AG04450 (cell line): ENCODE measurements at regions of chr1 and their contacts with region 1.

Region 1: DNA sequence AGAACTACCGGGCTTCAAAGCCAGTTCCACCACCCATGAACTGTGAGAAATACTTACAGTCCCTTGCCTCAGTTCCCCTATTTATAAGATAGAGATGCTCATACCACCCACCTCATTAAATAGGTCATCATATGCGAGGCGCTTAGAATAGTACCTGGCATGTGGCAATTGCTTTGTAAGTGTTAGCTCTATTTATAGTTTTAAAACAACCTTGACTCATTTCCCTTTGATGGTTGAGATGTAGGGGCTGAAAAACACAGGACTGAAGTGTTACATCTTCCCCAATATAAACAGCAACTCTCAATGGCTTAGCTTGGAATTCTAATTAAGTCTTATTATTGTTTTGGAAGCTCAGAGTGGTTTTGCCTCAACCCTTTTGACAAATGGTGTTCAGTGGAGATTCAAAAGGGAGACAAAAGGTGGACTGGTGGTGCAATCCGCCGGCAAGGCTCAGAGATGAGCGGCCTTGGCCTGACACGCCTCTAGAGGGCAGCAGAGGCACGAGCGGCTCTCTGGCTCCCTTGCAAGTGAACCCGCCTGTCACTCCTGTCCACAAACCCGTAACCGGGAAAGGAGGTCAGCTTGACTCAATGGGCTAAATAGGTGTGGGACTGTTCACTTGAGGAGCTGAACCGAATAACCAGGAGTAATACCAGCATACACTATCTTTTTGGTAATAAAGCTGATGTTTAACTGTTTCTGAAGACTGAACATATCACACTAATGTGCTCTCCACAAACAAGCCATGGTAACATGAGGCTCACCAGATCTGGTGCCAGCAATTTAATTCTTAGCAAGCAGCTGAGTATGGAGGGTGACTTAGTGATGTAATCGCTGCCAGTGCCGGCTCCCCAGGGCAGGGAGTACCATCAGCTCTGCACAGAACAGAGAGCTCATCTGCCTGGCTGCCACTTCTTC is 19.5 kb upstream of the SMYD2 start:
- DNase-seq: peak; percentile 27
- H3K4me3 ChIP-seq: no peak overlapping the region; the same call in 1 of the 2 replicates
- H3K27ac ChIP-seq: no peak overlapping the region
- H3K27me3 ChIP-seq: peaks cover 5% of the 10 kb centered on the region
- CTCF ChIP-seq: peak; percentile 99

Region 2: GRCh38 chr1:214198571-214198970 is 62.9 kb before region 1 on chr1:
- CTCF ChIA-PET with region 1: interaction called, 26 read pairs
- POLR2A ChIA-PET with region 1: no interaction called
- DNase-seq: no peak
- H3K4me3 ChIP-seq: no peak overlapping the region
- H3K27ac ChIP-seq: no peak overlapping the region
- H3K27me3 ChIP-seq: peaks cover 37% of the 10 kb centered on the region
- CTCF ChIP-seq: no peak

Region 3: GRCh38 chr1:214224611-214225354 is 36.7 kb before region 1 on chr1:
- CTCF ChIA-PET with region 1: interaction called, 46 read pairs
- POLR2A ChIA-PET with region 1: no interaction called
- DNase-seq: no peak
- H3K4me3 ChIP-seq: peak overlapping the region; percentile 54
- H3K27ac ChIP-seq: peak overlapping the region; percentile 21
- H3K27me3 ChIP-seq: peaks cover 16% of the 10 kb centered on the region
- CTCF ChIP-seq: no peak

Region 4: GRCh38 chr1:214281720-214282629 is 20.5 kb after region 1 on chr1:
- CTCF ChIA-PET with region 1: interaction called, 75 read pairs
- POLR2A ChIA-PET with region 1: no interaction called
- DNase-seq: peak; percentile 36
- H3K4me3 ChIP-seq: peak overlapping the region; percentile 82
- H3K27ac ChIP-seq: peak overlapping the region; percentile 59
- H3K27me3 ChIP-seq: no peaks in the 10 kb centered on the region
- CTCF ChIP-seq: no peak

Region 5: GRCh38 chr1:214303141-214303930 is 41.9 kb after region 1 on chr1:
- CTCF ChIA-PET with region 1: interaction called, 28 read pairs
- POLR2A ChIA-PET with region 1: no interaction called
- DNase-seq: no peak
- H3K4me3 ChIP-seq: peak overlapping the region; percentile 41
- H3K27ac ChIP-seq: no peak overlapping the region
- H3K27me3 ChIP-seq: no peaks in the 10 kb centered on the region
- CTCF ChIP-seq: no peak

Region 6: GRCh38 chr1:214321705-214322453 is 60.4 kb after region 1 on chr1:
- CTCF ChIA-PET with region 1: interaction called, 435 read pairs
- POLR2A ChIA-PET with region 1: no interaction called
- DNase-seq: no peak
- H3K4me3 ChIP-seq: no peak overlapping the region
- H3K27ac ChIP-seq: no peak overlapping the region
- H3K27me3 ChIP-seq: no peaks in the 10 kb centered on the region
- CTCF ChIP-seq: no peak

Region 7: DNA sequence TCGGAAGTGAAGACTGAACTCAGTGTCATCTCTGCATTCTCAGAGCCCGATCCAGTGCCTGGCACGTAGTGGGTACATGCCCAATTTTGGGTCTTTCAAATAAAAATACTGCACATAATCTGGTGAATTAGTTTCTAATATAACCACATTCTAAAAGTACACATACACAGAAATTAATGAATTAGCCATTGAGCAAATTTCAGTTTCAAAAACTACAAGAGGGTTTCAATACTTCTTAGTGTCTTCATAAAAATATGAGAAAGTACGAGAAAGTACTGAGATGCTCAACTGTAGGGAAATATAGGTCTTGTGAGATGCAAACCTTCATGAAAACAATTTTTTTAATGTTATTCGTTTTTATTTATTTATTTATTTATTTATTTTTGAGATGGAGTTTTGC is 106.4 kb after region 1 on chr1:
- CTCF ChIA-PET with region 1: no interaction called
- POLR2A ChIA-PET with region 1: no interaction called
- DNase-seq: no peak
- H3K4me3 ChIP-seq: no peak overlapping the region
- H3K27ac ChIP-seq: no peak overlapping the region
- H3K27me3 ChIP-seq: no peaks in the 10 kb centered on the region
- CTCF ChIP-seq: no peak

Region 8: DNA sequence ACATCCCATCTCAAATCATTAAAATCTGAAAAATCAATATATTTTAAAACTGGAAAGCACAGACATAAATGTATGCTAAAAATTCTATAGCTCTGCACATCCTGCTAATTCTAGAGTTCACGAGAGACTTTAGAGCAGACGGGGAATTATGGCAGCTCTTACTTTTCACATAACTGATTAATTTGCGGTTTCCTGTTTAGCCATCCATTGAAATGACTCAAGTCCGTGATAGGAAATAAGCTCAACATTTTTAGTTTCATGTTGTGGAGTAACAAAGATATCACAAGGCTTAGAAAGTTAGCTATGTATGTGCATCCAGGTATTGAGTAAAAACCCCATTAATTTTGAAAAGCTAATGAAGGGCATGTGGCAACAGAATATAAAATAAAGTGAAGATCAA is 142.7 kb after region 1 on chr1:
- CTCF ChIA-PET with region 1: no interaction called
- POLR2A ChIA-PET with region 1: no interaction called
- DNase-seq: no peak
- H3K4me3 ChIP-seq: no peak overlapping the region
- H3K27ac ChIP-seq: peak overlapping the region; percentile 85
- H3K27me3 ChIP-seq: no peaks in the 10 kb centered on the region
- CTCF ChIP-seq: no peak

Region 9: DNA sequence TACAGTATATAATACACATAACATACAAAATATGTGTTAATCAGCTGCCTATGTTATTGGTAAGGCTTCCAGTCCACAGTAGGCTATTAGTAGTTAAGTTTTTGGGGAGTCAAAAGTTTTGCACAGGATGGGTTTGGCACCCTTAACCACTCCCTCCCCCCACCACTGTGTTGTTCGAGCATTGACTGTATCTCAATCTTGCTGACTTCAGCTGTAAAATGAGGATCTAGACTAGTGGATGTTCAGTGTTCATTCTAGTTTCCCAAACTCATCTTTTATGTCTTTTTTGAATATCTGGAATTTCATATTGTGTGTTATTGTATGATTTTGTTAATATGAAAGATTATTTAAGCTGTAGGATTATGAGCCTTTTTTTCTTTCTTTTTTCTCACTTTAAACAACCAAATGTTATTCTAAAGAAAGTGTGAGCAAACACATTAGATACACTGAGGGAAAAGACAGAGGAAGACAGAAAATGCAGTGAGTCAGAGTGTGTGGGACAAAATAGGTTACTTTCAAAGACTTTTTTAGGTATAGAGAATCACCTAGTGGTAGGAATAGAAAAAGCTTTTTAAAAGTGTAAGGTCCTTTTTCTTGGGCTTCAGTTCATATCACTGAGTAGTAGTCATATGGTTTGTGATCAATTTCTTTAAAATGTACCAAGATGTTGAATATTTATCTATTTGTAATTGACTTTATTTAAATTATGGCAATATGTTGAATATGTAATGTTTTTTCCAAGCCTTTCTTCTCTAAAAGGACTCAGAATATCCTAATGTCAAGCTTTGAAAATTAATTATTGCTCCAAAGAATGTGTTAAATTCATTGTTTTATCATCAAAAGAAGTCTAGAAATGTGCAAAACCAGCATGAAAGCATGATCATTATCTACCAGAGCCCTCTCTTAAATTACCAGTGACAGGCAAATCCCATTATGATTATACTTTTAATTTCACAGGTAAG is 323.6 kb after region 1 on chr1:
- CTCF ChIA-PET with region 1: interaction called, 29 read pairs
- POLR2A ChIA-PET with region 1: no interaction called
- DNase-seq: peak; percentile 26
- H3K4me3 ChIP-seq: no peak overlapping the region
- H3K27ac ChIP-seq: no peak overlapping the region
- H3K27me3 ChIP-seq: no peaks in the 10 kb centered on the region
- CTCF ChIP-seq: peak; percentile 86

Region 10: DNA sequence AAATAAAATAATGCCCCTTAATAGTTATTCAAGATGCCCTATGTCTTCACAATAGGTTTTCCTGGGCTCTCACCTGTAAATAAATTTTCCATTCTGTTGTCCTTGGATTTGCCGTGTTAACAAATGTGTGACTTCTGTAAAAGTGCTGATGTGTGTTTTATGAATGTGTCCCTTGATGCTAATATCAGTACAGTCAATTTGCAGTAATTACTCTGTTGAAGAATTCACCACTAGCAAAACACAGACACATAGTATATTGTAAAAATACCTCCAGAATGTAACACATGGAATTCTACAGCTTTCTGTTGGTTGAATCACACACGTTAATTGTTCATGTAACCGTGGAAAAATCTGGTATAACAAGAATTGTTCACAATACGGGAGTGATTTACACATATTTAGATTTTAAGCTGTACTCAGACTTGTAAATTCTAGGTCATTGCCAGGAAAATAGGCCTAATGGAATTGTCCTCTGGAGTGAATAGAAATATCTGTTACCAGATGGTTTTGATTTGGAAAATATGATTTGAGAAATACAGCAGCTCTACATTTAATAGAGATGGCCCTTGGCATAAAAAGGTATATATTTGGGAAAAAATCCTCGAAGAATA is 784.3 kb after region 1 on chr1:
- CTCF ChIA-PET with region 1: no interaction called
- POLR2A ChIA-PET with region 1: no interaction called
- DNase-seq: no peak
- H3K4me3 ChIP-seq: no peak overlapping the region
- H3K27ac ChIP-seq: no peak overlapping the region
- H3K27me3 ChIP-seq: no peaks in the 10 kb centered on the region
- CTCF ChIP-seq: no peak